Heart right ventricle (tissue), 16 donors: ENCODE measurements at regions of chr18 and their contacts with region 1.

Region 1: DNA sequence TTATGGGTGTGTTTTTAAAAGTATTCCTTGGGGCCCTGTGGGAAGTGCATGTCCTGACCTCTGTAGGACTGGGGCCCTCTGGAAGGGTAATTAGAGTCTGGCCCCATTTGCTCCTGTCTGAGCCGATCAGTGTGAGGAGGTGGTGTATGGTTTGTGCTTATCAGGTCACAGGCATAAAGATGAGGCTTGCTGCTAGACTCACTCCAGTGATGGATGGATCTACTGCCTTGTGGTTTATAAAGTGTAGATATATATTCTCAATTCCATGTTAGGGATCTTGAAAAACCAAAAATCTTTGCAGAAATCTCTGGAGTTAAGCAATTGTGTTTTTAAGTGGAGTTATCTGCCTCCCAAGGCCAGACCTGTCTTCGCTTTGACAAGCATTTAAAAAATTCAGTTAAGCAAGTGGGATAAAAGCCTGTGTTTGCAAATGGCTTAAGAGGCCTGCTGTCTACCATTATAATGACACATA is 182.4 kb downstream of the PTPRM start:
- DNase-seq: no peak
- ATAC-seq: peak in 7 of 8 donors; percentile 16 to 79 (median 72)
- H3K4me3 ChIP-seq: no peak overlapping the region
- H3K27ac ChIP-seq: peak overlapping the region in 7 of 10 donors; percentile 8 to 64 (median 41)
- H3K4me1 ChIP-seq: peaks cover 5 to 80% (median 69%) of the 10 kb centered on the region in 9 donors
- H3K27me3 ChIP-seq: no peaks in the 10 kb centered on the region
- CTCF ChIP-seq: no peak

Region 2: DNA sequence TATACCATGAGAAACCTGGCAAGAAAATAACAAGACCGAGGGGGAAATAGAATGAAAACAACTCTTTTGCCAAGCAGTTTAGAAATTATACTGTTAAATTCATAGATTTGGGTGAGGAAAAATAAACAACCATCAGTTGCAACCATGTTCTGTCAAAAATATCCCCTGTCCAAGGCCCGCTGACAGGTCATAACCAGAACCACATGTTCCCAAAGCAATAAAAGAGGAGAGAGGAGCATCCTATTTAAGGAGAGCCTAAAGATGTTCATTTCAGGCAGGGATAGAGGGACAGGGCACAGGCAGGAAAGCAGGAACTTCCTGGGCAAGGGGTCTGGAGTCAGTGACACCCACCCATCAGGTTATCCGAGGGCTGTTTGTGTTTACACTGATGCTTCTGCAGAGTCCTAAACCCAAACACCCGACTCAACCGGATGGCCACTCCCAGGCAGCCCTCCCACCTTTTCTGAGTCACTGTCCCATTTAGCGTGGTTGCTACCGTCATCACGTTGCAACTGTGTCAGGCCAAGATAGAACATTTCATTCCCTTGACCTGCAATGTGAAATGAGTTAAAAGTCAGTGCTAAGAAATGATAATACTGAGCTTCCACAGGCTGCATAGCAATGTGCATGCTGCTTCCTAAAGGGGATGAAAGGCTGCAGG is 391.4 kb after region 1 on chr18:
- intact Hi-C with region 1: loop called in 1 of 10 experiments (anchors 10 kb)
- DNase-seq: peak; percentile 26 to 30
- ATAC-seq: peak in 7 of 8 donors; percentile 44 to 91 (median 82)
- H3K4me3 ChIP-seq: no peak overlapping the region
- H3K27ac ChIP-seq: peak overlapping the region; percentile 17 to 86 (median 67)
- H3K4me1 ChIP-seq: peaks cover 17 to 63% (median 55%) of the 10 kb centered on the region in 9 donors
- H3K27me3 ChIP-seq: no peaks in the 10 kb centered on the region
- CTCF ChIP-seq: no peak